ENCODE measurements at regions of chr3 and their contacts with region 1.

Region 1: GRCh38 chr3:159763602-159764489 is 224.8 kb upstream of the IL12A start:
- DNase-seq: peak; percentile 85
- H3K4me3 ChIP-seq: peak overlapping the region; percentile 22 to 80 (median 64)
- H3K27ac ChIP-seq: peak overlapping the region; percentile 88
- H3K4me1 ChIP-seq: peaks cover 36% of the 10 kb centered on the region
- H3K27me3 ChIP-seq: no peaks in the 10 kb centered on the region
- CTCF ChIP-seq: peak in 1 of 2 donors; percentile 20
- POLR2A ChIP-seq: peak; percentile 12

Region 2: GRCh38 chr3:158713094-158713499 is 1050.7 kb before region 1 on chr3:
- CTCF ChIA-PET with region 1: no interaction called
- POLR2A ChIA-PET with region 1: no interaction called
- dilution Hi-C with region 1: no loop called
- intact Hi-C with region 1: loop called (anchors 10 kb)
- DNase-seq: peak; percentile 99
- H3K4me3 ChIP-seq: no peak overlapping the region
- H3K27ac ChIP-seq: peak overlapping the region; percentile 59
- H3K4me1 ChIP-seq: peaks cover 47% of the 10 kb centered on the region
- H3K27me3 ChIP-seq: no peaks in the 10 kb centered on the region
- CTCF ChIP-seq: no peak
- POLR2A ChIP-seq: no peak

Region 3: GRCh38 chr3:159130108-159130507 is 633.7 kb before region 1 on chr3:
- CTCF ChIA-PET with region 1: no interaction called
- POLR2A ChIA-PET with region 1: no interaction called
- dilution Hi-C with region 1: no loop called
- intact Hi-C with region 1: no loop called
- DNase-seq: no peak
- H3K4me3 ChIP-seq: no peak overlapping the region
- H3K27ac ChIP-seq: no peak overlapping the region
- H3K4me1 ChIP-seq: peaks cover 14% of the 10 kb centered on the region
- H3K27me3 ChIP-seq: no peaks in the 10 kb centered on the region
- CTCF ChIP-seq: peak in 1 of 2 donors; percentile 14
- POLR2A ChIP-seq: no peak

Region 4: GRCh38 chr3:159711560-159712333 is 52.1 kb before region 1 on chr3:
- CTCF ChIA-PET with region 1: interaction called, 8 read pairs
- POLR2A ChIA-PET with region 1: interaction called, 21 read pairs
- dilution Hi-C with region 1: no loop called
- intact Hi-C with region 1: loop called (anchors 1 kb)
- DNase-seq: peak; percentile 99
- H3K4me3 ChIP-seq: no peak overlapping the region
- H3K27ac ChIP-seq: peak overlapping the region; percentile 84
- H3K4me1 ChIP-seq: peaks cover 7% of the 10 kb centered on the region
- H3K27me3 ChIP-seq: peaks cover 0 to 3% of the 10 kb centered on the region in 2 experiments
- CTCF ChIP-seq: no peak
- POLR2A ChIP-seq: peak; percentile 65

Region 5: GRCh38 chr3:159787191-159787590 is 23.3 kb after region 1 on chr3:
- CTCF ChIA-PET with region 1: interaction called, 17 read pairs
- POLR2A ChIA-PET with region 1: interaction called, 9 read pairs
- dilution Hi-C with region 1: no loop called
- intact Hi-C with region 1: loop called (anchors 1 kb)
- DNase-seq: peak; percentile 88
- H3K4me3 ChIP-seq: no peak overlapping the region
- H3K27ac ChIP-seq: peak overlapping the region; percentile 87
- H3K4me1 ChIP-seq: peaks cover 45% of the 10 kb centered on the region
- H3K27me3 ChIP-seq: no peaks in the 10 kb centered on the region
- CTCF ChIP-seq: no peak
- POLR2A ChIP-seq: no peak

Region 6: GRCh38 chr3:159852821-159853505 is 89.1 kb after region 1 on chr3:
- CTCF ChIA-PET with region 1: no interaction called
- POLR2A ChIA-PET with region 1: interaction called, 13 read pairs
- dilution Hi-C with region 1: no loop called
- intact Hi-C with region 1: loop called (anchors 1 kb)
- DNase-seq: peak; percentile 97
- H3K4me3 ChIP-seq: peak overlapping the region in 2 of 3 experiments; percentile 45 to 52
- H3K27ac ChIP-seq: peak overlapping the region; percentile 97
- H3K4me1 ChIP-seq: peaks cover 70% of the 10 kb centered on the region
- H3K27me3 ChIP-seq: no peaks in the 10 kb centered on the region
- CTCF ChIP-seq: no peak
- POLR2A ChIP-seq: peak; percentile 2

Region 7: GRCh38 chr3:160399125-160400029 is 635.5 kb after region 1 on chr3 and contains the starts of genes IFT80 and SMC4:
- CTCF ChIA-PET with region 1: no interaction called
- POLR2A ChIA-PET with region 1: no interaction called
- dilution Hi-C with region 1: no loop called
- intact Hi-C with region 1: loop called (anchors 2 kb)
- DNase-seq: peak; percentile 97
- H3K4me3 ChIP-seq: peak within 1 kb of the TSS; percentile 77 to 79 (median 78)
- H3K27ac ChIP-seq: peak within 1 kb of the TSS; percentile 76
- H3K4me1 ChIP-seq: peaks cover 16% of the 10 kb centered on the region
- H3K27me3 ChIP-seq: no peaks in the 10 kb centered on the region
- CTCF ChIP-seq: no peak
- POLR2A ChIP-seq: peak; percentile 52
- total RNA-seq, gene IFT80: 21.4 and 22.5 TPM in 2 replicates
- total RNA-seq, gene SMC4: 126 and 153 TPM in 2 replicates